Right ventricle myocardium inferior (tissue), 1 donor: ENCODE measurements at regions of chr1 and their contacts with region 1.

Region 1: GRCh38 chr1:165367375-165367993 is 11.0 kb upstream of the LMX1A start:
- DNase-seq: no peak
- ATAC-seq: no peak

Region 2: DNA sequence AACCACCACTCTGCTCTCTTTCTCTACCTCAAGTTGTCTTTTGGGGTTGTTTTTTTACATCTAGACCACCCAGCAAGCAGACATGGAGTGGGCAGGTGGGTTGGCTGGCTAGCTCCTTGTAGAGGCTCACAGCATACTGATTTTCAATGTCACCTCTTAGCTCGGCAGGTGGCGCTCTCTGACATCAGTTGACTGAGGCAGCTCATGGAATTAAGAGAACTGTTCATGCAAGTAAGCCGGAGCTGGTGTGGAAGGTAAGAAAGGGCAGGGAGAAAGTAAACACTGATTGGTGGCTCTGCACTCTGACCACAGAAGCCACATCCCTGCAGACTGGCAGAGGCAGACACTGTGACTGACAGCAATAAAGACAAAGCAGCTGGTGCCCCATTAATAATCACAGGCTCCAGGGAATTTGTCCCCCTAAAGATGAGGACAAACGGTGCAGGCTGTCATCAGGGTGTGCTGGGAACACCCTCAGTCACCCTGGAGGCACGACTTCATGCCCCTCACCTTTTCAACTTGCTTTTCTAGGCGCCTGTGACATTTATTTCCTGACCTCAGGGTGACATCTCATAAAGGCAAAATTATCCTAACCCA is 237.8 kb before region 1 on chr1:
- intact Hi-C with region 1: loop called (anchors 1 kb)
- DNase-seq: no peak
- ATAC-seq: no peak

Region 3: GRCh38 chr1:165144757-165145397 is 222.6 kb before region 1 on chr1:
- intact Hi-C with region 1: loop called (anchors 1 kb)
- DNase-seq: no peak
- ATAC-seq: no peak